ENCODE measurements at regions of chr2 and their contacts with region 1.

Region 1: DNA sequence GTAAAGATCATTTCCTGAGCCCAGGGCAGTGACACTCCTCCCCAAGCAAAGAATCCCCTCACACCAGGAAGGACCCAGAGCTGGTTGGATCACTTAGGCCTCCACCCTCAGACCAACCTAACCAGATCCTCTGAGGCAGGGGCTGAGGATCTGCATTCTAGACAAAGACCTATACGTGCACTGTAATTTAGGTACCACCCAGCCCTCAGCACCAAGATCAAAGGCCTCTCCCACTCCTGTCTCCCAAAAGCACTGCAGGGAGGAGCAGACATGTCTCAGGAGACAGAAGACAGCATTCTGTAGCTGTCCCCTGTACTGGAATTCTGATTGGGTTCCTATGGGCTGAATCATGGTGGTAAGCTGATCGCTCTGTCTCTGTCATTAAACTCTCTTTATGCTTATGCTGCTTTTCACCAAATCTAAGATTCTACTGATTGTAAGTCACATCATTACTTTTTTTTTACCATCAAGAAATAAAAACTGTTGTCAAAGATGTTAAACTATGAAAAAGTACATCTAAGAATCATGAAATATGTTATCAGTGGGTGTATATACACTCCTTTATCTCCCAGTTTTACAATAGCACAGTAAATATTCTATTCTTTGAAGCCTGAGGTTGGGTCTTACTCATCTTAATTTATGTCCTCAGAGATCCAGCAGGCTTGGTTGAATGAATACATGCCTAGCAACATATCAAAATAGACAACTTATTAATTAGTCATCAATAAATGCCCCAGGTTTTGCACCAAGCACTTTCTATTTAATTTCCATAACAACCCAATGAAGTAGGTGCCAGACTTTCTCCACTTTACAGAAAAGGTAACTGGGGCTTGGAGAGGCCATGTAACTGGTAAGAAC is 28.3 kb downstream of the MCFD2 start:
- H3K4me3 ChIP-seq: no peak overlapping the region
- H3K27ac ChIP-seq: no peak overlapping the region
- H3K4me1 ChIP-seq: no peaks in the 10 kb centered on the region
- CTCF ChIP-seq: no peak

Region 2: GRCh38 chr2:46521215-46521683 is 366.0 kb before region 1 on chr2:
- CTCF ChIA-PET with region 1: no interaction called
- POLR2A ChIA-PET with region 1: no interaction called
- H3K4me3 ChIP-seq: no peak overlapping the region
- H3K27ac ChIP-seq: no peak overlapping the region
- H3K4me1 ChIP-seq: no peaks in the 10 kb centered on the region
- CTCF ChIP-seq: no peak

Region 3: DNA sequence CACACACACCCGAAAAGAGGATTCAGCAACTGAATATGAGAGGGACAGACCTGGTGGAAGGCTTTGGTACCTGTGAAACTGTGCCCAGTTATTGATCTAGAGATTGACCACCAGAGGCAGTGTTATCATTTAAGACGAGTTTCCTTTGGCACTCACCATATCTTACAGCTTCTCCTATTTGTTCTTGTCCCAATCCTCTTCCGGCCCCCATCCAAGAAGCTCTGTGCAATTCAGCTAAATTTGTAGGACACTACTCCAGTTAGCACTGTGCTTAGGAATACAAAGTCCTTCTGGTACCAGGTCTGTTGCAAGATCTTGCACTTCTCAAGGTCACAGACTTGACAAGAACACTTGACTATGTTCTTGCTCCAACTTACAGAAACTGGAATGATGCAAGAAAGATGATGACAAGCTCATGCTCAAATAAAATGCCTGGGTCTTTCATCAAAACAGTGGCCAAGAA is 230.2 kb before region 1 on chr2:
- CTCF ChIA-PET with region 1: interaction called, 14 read pairs
- POLR2A ChIA-PET with region 1: no interaction called
- H3K4me3 ChIP-seq: no peak overlapping the region
- H3K27ac ChIP-seq: no peak overlapping the region
- H3K4me1 ChIP-seq: peaks cover 3% of the 10 kb centered on the region
- CTCF ChIP-seq: no peak

Region 4: GRCh38 chr2:47058003-47058931 is 171.0 kb after region 1 on chr2:
- CTCF ChIA-PET with region 1: no interaction called
- POLR2A ChIA-PET with region 1: no interaction called
- H3K4me3 ChIP-seq: no peak overlapping the region
- H3K27ac ChIP-seq: no peak overlapping the region
- H3K4me1 ChIP-seq: no peaks in the 10 kb centered on the region
- CTCF ChIP-seq: no peak